ENCODE measurements at regions of chr1 and their contacts with region 1.

Region 1: GRCh38 chr1:234716908-234717375 is 107.0 kb upstream of the IRF2BP2 start:
- DNase-seq: peak; percentile 81
- ATAC-seq: peak; percentile 62
- H3K4me3 ChIP-seq: peak overlapping the region; percentile 52 to 75 (median 62)
- H3K27ac ChIP-seq: peak overlapping the region; percentile 99
- H3K4me1 ChIP-seq: peaks cover 98% of the 10 kb centered on the region
- H3K27me3 ChIP-seq: no peaks in the 10 kb centered on the region; a peak in 1 of 5 replicates
- CTCF ChIP-seq: no peak
- EP300 ChIP-seq: no peak
- POLR2A ChIP-seq: peak; percentile 64 to 68; a peak in 3 of 4 replicates
- RAD21 ChIP-seq: no peak

Region 2: GRCh38 chr1:234533975-234534876 is 182.7 kb before region 1 on chr1:
- CTCF ChIA-PET with region 1: no interaction called
- POLR2A ChIA-PET with region 1: no interaction called
- in situ Hi-C with region 1: no loop called
- intact Hi-C with region 1: no loop called
- DNase-seq: no peak
- ATAC-seq: no peak
- H3K4me3 ChIP-seq: no peak overlapping the region
- H3K27ac ChIP-seq: no peak overlapping the region
- H3K4me1 ChIP-seq: peaks cover 76% of the 10 kb centered on the region
- H3K27me3 ChIP-seq: no peaks in the 10 kb centered on the region; a peak in 2 of 5 replicates
- CTCF ChIP-seq: no peak
- EP300 ChIP-seq: no peak
- POLR2A ChIP-seq: no peak
- RAD21 ChIP-seq: no peak

Region 3: DNA sequence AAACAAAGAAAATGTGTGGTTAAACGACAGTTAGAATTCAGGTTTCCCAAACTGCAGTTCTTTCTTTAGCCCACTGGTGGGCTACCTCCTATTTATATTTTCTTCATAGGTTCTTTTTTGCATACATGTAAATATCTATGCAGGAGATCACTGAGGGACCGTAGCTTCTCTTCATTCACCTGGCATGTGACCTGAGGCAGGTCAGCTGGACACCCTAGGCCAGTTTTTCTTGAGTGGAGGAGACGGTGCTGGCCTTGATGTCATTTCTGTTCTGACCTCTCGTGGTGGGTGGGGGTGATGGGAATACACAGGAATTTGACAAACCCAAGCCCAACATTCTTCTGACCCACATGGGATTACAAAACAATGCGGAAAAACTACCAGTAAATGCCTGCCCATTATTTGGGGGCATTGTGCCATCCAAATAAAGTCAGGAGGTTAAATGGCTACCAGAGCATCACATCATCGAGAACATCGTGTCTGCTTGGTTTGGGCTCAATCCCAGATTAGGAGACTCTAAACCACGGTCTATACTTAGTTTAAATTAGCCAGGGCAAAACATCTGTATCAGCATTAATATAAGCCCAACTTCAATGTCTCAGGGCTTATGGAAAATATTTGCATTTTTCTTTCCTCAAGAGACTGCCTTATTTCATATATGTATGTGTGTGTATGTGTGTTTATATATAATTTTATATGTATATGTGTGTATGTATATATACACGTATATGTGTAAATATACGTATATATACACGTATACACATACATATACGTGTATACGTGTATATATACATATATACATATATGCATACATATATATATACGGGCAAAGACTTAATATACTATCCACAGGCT is 99.6 kb before region 1 on chr1:
- CTCF ChIA-PET with region 1: no interaction called
- POLR2A ChIA-PET with region 1: interaction called, 1,137 read pairs
- in situ Hi-C with region 1: loop called (anchors 5 kb)
- intact Hi-C with region 1: loop called (anchors 1 kb)
- DNase-seq: no peak
- ATAC-seq: no peak
- H3K4me3 ChIP-seq: no peak overlapping the region
- H3K27ac ChIP-seq: peak overlapping the region; percentile 99
- H3K4me1 ChIP-seq: peaks cover 97% of the 10 kb centered on the region
- H3K27me3 ChIP-seq: no peaks in the 10 kb centered on the region
- CTCF ChIP-seq: no peak
- EP300 ChIP-seq: no peak
- POLR2A ChIP-seq: no peak
- RAD21 ChIP-seq: no peak

Region 4: GRCh38 chr1:234656856-234657654 is 59.9 kb before region 1 on chr1:
- CTCF ChIA-PET with region 1: no interaction called
- POLR2A ChIA-PET with region 1: interaction called, 19 read pairs
- in situ Hi-C with region 1: no loop called
- intact Hi-C with region 1: no loop called
- DNase-seq: peak; percentile 38
- ATAC-seq: peak; percentile 53
- H3K4me3 ChIP-seq: no peak overlapping the region
- H3K27ac ChIP-seq: no peak overlapping the region
- H3K4me1 ChIP-seq: peaks cover 65% of the 10 kb centered on the region
- H3K27me3 ChIP-seq: no peaks in the 10 kb centered on the region
- CTCF ChIP-seq: no peak
- EP300 ChIP-seq: no peak
- POLR2A ChIP-seq: no peak
- RAD21 ChIP-seq: no peak

Region 5: DNA sequence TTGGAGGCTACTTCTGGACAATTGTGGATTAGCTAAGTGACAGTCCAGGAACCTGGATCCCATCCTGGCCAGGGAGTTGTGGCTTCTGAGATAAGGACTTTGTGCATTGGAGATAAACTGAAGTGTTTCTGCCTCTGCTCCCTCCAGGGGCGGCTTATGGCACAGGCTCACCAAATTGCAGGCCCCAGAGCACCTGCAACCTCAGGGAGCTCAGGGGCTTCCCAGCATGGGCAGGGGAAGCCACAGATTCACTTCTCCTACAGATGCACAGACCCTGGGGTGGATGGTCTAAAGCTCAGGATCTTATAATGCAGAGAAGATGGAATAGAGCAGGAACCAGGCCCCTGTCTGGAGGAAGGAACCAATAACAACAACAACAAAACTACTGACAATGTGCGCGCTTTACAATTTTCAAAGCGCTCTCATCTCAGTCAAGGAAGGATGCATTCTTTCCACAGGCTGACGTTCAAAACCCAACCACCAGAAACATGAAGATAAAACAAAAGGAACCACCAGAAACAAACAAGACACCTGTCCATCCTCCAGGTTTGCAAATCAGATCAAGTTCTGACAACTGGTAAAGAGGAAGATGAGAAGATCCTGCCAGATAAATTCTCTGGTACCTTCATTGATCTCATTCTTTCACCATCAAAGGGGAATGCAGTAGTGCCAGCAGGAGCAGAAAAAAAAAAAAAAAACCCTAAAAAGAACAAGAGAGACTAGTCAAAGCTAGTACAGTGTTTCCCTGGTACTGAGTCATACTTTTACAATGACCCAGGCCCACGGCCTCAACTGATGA is 14.0 kb after region 1 on chr1:
- CTCF ChIA-PET with region 1: interaction called, 3 read pairs
- POLR2A ChIA-PET with region 1: interaction called, 136 read pairs
- in situ Hi-C with region 1: no loop called
- intact Hi-C with region 1: no loop called
- DNase-seq: peak; percentile 59
- ATAC-seq: peak; percentile 47
- H3K4me3 ChIP-seq: no peak overlapping the region
- H3K27ac ChIP-seq: peak overlapping the region; percentile 36
- H3K4me1 ChIP-seq: peaks cover 96% of the 10 kb centered on the region
- H3K27me3 ChIP-seq: no peaks in the 10 kb centered on the region
- CTCF ChIP-seq: no peak
- EP300 ChIP-seq: peak in 1 of 2 experiments; percentile 9; a peak in 1 of 4 replicates
- POLR2A ChIP-seq: no peak
- RAD21 ChIP-seq: no peak

Region 6: DNA sequence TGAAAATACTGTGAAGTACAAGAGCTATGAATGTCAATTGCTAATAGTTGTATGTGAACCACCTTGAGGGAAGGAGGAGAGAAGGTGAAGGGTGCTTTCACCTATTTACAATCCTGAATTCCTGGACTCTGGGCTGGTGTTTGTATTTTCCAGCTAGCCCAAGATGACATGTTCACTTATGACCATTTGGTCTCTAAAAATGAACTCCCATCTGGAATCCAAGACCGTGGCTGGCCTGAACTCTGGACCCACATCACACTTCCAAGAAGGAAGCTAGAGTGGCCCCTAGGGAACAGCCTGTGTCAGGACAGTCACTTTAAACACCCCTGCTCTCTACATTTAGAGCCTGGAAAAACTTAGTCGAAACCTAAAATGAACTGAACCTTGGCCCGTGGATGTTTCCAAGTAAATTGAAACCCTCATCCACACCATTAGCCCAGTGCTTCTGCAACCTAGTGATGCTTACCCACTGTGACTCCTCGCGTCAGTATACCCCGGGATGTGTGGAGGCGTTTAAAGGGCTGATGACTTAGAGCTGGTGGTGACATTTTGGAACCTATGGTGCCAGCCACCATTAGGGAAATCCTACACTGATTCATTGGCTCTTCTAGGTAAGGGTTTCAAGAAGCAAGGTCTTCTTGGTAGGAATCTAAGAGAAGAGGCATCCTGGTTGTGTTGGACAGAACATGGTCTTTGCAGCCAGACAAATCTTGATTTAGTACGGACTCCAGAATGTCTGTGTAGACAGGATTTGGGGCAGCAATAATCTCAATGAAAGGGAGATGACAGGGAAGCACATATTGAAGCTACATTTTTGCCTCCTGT is 64.5 kb after region 1 on chr1:
- CTCF ChIA-PET with region 1: no interaction called
- POLR2A ChIA-PET with region 1: interaction called, 10 read pairs
- in situ Hi-C with region 1: no loop called
- intact Hi-C with region 1: no loop called
- DNase-seq: peak; percentile 57
- ATAC-seq: peak; percentile 47
- H3K4me3 ChIP-seq: no peak overlapping the region
- H3K27ac ChIP-seq: no peak overlapping the region
- H3K4me1 ChIP-seq: peaks cover 29% of the 10 kb centered on the region
- H3K27me3 ChIP-seq: peaks cover 0 to 27% of the 10 kb centered on the region in 2 experiments; a peak in 3 of 5 replicates
- CTCF ChIP-seq: peak; percentile 52
- EP300 ChIP-seq: peak in 1 of 2 experiments; percentile 25; a peak in 1 of 4 replicates
- POLR2A ChIP-seq: no peak
- RAD21 ChIP-seq: peak; percentile 36; the same call in 1 of the 2 replicates

Region 7: GRCh38 chr1:234851450-234852438 is 134.8 kb after region 1 on chr1:
- CTCF ChIA-PET with region 1: no interaction called
- POLR2A ChIA-PET with region 1: no interaction called
- in situ Hi-C with region 1: no loop called
- intact Hi-C with region 1: no loop called
- DNase-seq: no peak
- ATAC-seq: no peak
- H3K4me3 ChIP-seq: no peak overlapping the region
- H3K27ac ChIP-seq: no peak overlapping the region
- H3K4me1 ChIP-seq: peaks cover 19% of the 10 kb centered on the region
- H3K27me3 ChIP-seq: no peaks in the 10 kb centered on the region
- CTCF ChIP-seq: no peak
- EP300 ChIP-seq: no peak
- POLR2A ChIP-seq: no peak
- RAD21 ChIP-seq: no peak

Region 8: GRCh38 chr1:235067263-235068172 is 350.6 kb after region 1 on chr1:
- CTCF ChIA-PET with region 1: no interaction called
- POLR2A ChIA-PET with region 1: interaction called, 79 read pairs
- in situ Hi-C with region 1: no loop called
- intact Hi-C with region 1: no loop called
- DNase-seq: peak; percentile 58
- ATAC-seq: peak; percentile 4; the same call in 2 of the 3 replicates
- H3K4me3 ChIP-seq: peak overlapping the region; percentile 41 to 76 (median 60); a peak in 5 of 6 replicates
- H3K27ac ChIP-seq: peak overlapping the region; percentile 86
- H3K4me1 ChIP-seq: peaks cover 97% of the 10 kb centered on the region
- H3K27me3 ChIP-seq: no peaks in the 10 kb centered on the region
- CTCF ChIP-seq: no peak
- EP300 ChIP-seq: no peak
- POLR2A ChIP-seq: peak in 1 of 2 experiments; percentile 21; a peak in 2 of 4 replicates
- RAD21 ChIP-seq: no peak

Measured in HepG2 (cell line).